B cell (primary cell): ENCODE measurements at regions of chr14 and their contacts with region 1.

Region 1: GRCh38 chr14:35826218-35826951 is at the start of gene BRMS1L:
- DNase-seq: peak; percentile 97
- ATAC-seq: peak; percentile 95
- H3K4me3 ChIP-seq: peak within 1 kb of the TSS; percentile 81 to 100 (median 90)
- H3K4me3 Mint-ChIP-seq: peak within 1 kb of the TSS; percentile 89
- H3K27ac ChIP-seq: peak within 1 kb of the TSS; percentile 75
- H3K27ac Mint-ChIP-seq: peak within 1 kb of the TSS; percentile 91
- H3K4me1 ChIP-seq: peaks cover 7 to 11% of the 10 kb centered on the region in 2 donors
- H3K4me1 Mint-ChIP-seq: peaks cover 25% of the 10 kb centered on the region
- H3K27me3 ChIP-seq: no peaks in the 10 kb centered on the region
- H3K27me3 Mint-ChIP-seq: no peaks in the 10 kb centered on the region
- CTCF ChIP-seq: no peak
- total RNA-seq, gene BRMS1L: 4.7 and 6.3 TPM in 2 replicates

Region 2: GRCh38 chr14:34461334-34462131 is 1364.9 kb before region 1 on chr14:
- CTCF ChIA-PET with region 1: no interaction called
- POLR2A ChIA-PET with region 1: no interaction called
- intact Hi-C with region 1: loop called (anchors 2 kb)
- DNase-seq: peak; percentile 50
- ATAC-seq: no peak
- H3K4me3 ChIP-seq: peak overlapping the region; percentile 50 to 95 (median 64)
- H3K4me3 Mint-ChIP-seq: peak overlapping the region; percentile 86
- H3K27ac ChIP-seq: peak overlapping the region; percentile 16 to 60
- H3K27ac Mint-ChIP-seq: peak overlapping the region; percentile 91
- H3K4me1 ChIP-seq: peaks cover 8 to 15% of the 10 kb centered on the region in 2 donors
- H3K4me1 Mint-ChIP-seq: peaks cover 18% of the 10 kb centered on the region
- H3K27me3 ChIP-seq: no peaks in the 10 kb centered on the region
- H3K27me3 Mint-ChIP-seq: no peaks in the 10 kb centered on the region
- CTCF ChIP-seq: no peak

Region 3: GRCh38 chr14:34629657-34630529 is 1196.5 kb before region 1 on chr14 and contains the start of gene SNX6:
- CTCF ChIA-PET with region 1: no interaction called
- POLR2A ChIA-PET with region 1: no interaction called
- intact Hi-C with region 1: loop called (anchors 10 kb)
- DNase-seq: peak; percentile 89
- ATAC-seq: peak; percentile 98
- H3K4me3 ChIP-seq: peak within 1 kb of the TSS; percentile 50 to 98 (median 96)
- H3K4me3 Mint-ChIP-seq: peak within 1 kb of the TSS; percentile 95
- H3K27ac ChIP-seq: peak within 1 kb of the TSS; percentile 85 to 94
- H3K27ac Mint-ChIP-seq: peak within 1 kb of the TSS; percentile 93
- H3K4me1 ChIP-seq: peaks cover 11 to 18% of the 10 kb centered on the region in 2 donors
- H3K4me1 Mint-ChIP-seq: peaks cover 18% of the 10 kb centered on the region
- H3K27me3 ChIP-seq: peaks cover 0 to 3% (median 0%) of the 10 kb centered on the region in 4 experiments
- H3K27me3 Mint-ChIP-seq: no peaks in the 10 kb centered on the region
- CTCF ChIP-seq: no peak
- total RNA-seq, gene SNX6: 61.0 and 66.3 TPM in 2 replicates

Region 4: GRCh38 chr14:35046048-35046741 is 780.2 kb before region 1 on chr14 and contains the start of gene FAM177A1:
- CTCF ChIA-PET with region 1: no interaction called
- POLR2A ChIA-PET with region 1: interaction called, 4 read pairs
- intact Hi-C with region 1: loop called (anchors 1 kb)
- DNase-seq: peak; percentile 99
- ATAC-seq: peak; percentile 94
- H3K4me3 ChIP-seq: peak within 1 kb of the TSS; percentile 70 to 97 (median 80)
- H3K4me3 Mint-ChIP-seq: peak within 1 kb of the TSS; percentile 87
- H3K27ac ChIP-seq: peak within 1 kb of the TSS; percentile 94 to 96
- H3K27ac Mint-ChIP-seq: peak within 1 kb of the TSS; percentile 95
- H3K4me1 ChIP-seq: peaks cover 11 to 15% of the 10 kb centered on the region in 2 donors
- H3K4me1 Mint-ChIP-seq: peaks cover 26% of the 10 kb centered on the region
- H3K27me3 ChIP-seq: no peaks in the 10 kb centered on the region
- H3K27me3 Mint-ChIP-seq: no peaks in the 10 kb centered on the region
- CTCF ChIP-seq: no peak
- total RNA-seq, gene FAM177A1: 32.1 and 39.4 TPM in 2 replicates

Region 5: DNA sequence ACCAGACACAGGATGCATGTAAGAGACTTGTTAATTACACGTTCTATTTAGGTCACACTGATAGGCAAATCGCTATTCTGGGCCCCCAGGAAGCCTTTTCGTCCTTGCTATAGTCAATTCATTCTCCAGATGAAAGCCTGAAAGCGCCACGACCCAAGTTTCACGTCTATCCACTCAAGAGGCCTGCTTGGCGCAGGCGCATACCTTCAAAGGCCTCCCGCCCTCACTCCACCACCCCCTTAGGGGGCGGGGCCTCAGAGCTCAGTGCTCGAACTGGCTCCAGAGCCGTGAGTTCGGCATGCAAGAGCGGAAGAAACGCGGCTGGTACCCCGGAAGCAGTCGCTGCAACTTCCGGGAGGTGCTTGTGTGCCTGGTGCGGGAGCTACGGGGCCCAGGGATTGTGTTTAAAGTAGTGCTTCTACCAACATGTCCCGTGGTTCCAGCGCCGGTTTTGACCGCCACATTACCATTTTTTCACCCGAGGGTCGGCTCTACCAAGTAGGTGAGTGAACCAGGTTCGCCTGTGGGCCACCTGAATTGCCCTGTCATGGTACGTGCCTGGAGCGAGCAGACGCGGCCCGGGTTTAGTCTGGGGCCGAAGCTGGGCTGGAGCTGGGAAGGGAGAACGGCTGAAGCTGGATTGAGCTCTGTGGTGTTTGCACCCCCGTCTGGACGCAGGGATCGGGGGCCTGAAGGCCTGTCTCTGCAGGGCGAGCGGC is 534.2 kb before region 1 on chr14 and contains the start of gene PSMA6:
- CTCF ChIA-PET with region 1: no interaction called
- POLR2A ChIA-PET with region 1: interaction called, 8 read pairs
- intact Hi-C with region 1: loop called (anchors 1 kb)
- DNase-seq: peak; percentile 99
- ATAC-seq: peak; percentile 98
- H3K4me3 ChIP-seq: peak within 1 kb of the TSS; percentile 71 to 96 (median 93)
- H3K4me3 Mint-ChIP-seq: peak within 1 kb of the TSS; percentile 99
- H3K27ac ChIP-seq: peak within 1 kb of the TSS; percentile 75 to 93
- H3K27ac Mint-ChIP-seq: peak within 1 kb of the TSS; percentile 96
- H3K4me1 ChIP-seq: peaks cover 34 to 44% of the 10 kb centered on the region in 2 donors
- H3K4me1 Mint-ChIP-seq: peaks cover 44% of the 10 kb centered on the region
- H3K27me3 ChIP-seq: no peaks in the 10 kb centered on the region
- H3K27me3 Mint-ChIP-seq: no peaks in the 10 kb centered on the region
- CTCF ChIP-seq: no peak
- total RNA-seq, gene PSMA6: 70.6 and 86.8 TPM in 2 replicates

Region 6: GRCh38 chr14:35814371-35815005 is 11.9 kb before region 1 on chr14:
- CTCF ChIA-PET with region 1: interaction called, 31 read pairs
- POLR2A ChIA-PET with region 1: interaction called, 4 read pairs
- intact Hi-C with region 1: loop called (anchors 1 kb)
- DNase-seq: peak; percentile 76
- ATAC-seq: peak; percentile 95
- H3K4me3 ChIP-seq: no peak overlapping the region
- H3K4me3 Mint-ChIP-seq: no peak overlapping the region
- H3K27ac ChIP-seq: no peak overlapping the region
- H3K27ac Mint-ChIP-seq: no peak overlapping the region
- H3K4me1 ChIP-seq: no peaks in the 10 kb centered on the region
- H3K4me1 Mint-ChIP-seq: peaks cover 2% of the 10 kb centered on the region
- H3K27me3 ChIP-seq: no peaks in the 10 kb centered on the region
- H3K27me3 Mint-ChIP-seq: no peaks in the 10 kb centered on the region
- CTCF ChIP-seq: peak; percentile 82